Activated CD4-positive, alpha-beta T cell treated with anti-CD3 and anti-CD28 coated beads, Interleukin-2, amount 10 ng/mL, durations not matched to agents 24 days and 14 days (primary cell): ENCODE measurements at regions of chr5 and their contacts with region 1.

Region 1: DNA sequence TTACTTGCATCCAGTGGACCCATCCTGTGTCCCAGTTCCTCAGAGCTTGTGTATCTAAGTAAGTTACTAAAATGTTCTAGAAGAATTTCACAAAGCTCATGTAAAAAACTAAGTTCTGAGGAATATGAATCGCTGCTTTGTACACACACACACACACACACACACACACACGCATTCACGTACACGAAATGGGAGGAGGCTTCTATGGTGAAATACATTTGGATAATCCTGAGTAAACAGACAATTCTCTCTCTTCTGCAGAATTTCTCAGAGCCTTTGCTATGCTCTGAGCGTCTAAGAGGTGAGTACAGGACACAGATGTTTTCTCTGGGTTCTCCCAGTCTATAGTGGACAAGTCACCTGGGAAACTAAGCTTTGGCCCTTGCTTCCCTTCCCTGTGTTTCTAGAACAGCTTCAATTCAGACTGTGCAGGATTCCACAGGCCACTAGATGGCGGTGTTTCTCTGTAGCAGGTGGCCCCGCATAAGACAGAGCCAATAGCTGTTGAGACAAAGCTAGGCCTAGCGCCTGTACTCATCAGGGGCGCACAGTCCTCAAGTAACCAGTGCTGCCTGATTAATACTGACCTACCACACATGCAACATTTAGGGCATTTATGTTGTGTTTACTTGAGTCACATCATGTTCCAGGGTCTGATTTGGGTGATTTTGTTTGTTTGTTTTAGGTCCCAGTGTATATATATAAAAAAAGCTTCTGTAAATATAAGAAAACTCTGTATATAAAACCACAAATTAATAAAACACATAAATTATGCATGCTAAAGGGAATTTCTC is 114.8 kb downstream of the LIFR start:
- DNase-seq: peak; percentile 94
- H3K4me3 Mint-ChIP-seq: no peak overlapping the region
- H3K27ac Mint-ChIP-seq: no peak overlapping the region
- H3K4me1 Mint-ChIP-seq: no peaks in the 10 kb centered on the region
- H3K27me3 Mint-ChIP-seq: peaks cover 36% of the 10 kb centered on the region

Region 2: DNA sequence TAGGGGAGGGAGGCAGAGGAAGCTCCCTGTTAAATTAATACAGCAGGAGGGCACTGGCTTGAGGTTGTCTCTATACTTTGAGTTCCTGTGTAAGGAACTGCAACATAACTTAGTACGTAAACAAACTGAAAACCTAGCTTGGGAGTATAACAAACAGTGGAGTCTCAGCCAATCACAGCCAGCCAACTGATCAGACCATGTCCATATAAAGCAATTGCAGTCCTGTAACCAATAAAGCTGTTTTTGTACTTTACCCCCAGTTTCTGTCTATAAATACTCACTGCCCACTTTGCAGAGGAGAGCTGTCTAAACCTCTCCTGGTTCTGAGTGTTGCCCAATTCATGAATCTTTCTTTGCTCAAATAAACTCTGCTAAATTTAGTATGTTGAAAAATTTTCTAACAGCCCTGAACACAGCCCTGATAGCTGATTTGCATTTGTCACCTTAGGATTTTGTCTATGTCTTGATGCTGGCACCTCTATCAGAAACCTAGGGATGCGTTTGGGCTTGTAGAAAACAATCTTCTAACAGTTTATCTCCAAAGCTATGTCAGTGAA is 641.7 kb before region 1 on chr5:
- intact Hi-C with region 1: no loop called
- DNase-seq: no peak
- H3K4me3 Mint-ChIP-seq: no peak overlapping the region
- H3K27ac Mint-ChIP-seq: no peak overlapping the region
- H3K4me1 Mint-ChIP-seq: no peaks in the 10 kb centered on the region
- H3K27me3 Mint-ChIP-seq: peaks cover 2% of the 10 kb centered on the region

Region 3: GRCh38 chr5:38551030-38552017 is 109.7 kb after region 1 on chr5:
- intact Hi-C with region 1: loop called (anchors 1 kb)
- DNase-seq: peak; percentile 60
- H3K4me3 Mint-ChIP-seq: no peak overlapping the region
- H3K27ac Mint-ChIP-seq: no peak overlapping the region
- H3K4me1 Mint-ChIP-seq: peaks cover 5% of the 10 kb centered on the region
- H3K27me3 Mint-ChIP-seq: peaks cover 47% of the 10 kb centered on the region

Region 4: GRCh38 chr5:38556599-38557305 is 115.1 kb after region 1 on chr5 and contains the start of gene LIFR:
- intact Hi-C with region 1: loop called (anchors 1 kb)
- DNase-seq: peak; percentile 87
- H3K4me3 Mint-ChIP-seq: peak within 1 kb of the TSS; percentile 88
- H3K27ac Mint-ChIP-seq: peak within 1 kb of the TSS; percentile 67
- H3K4me1 Mint-ChIP-seq: peaks cover 7% of the 10 kb centered on the region
- H3K27me3 Mint-ChIP-seq: peaks cover 66% of the 10 kb centered on the region
- total RNA-seq, gene LIFR: 0.12 TPM in 2 replicates

Region 5: GRCh38 chr5:38666668-38667498 is 225.2 kb after region 1 on chr5:
- intact Hi-C with region 1: loop called (anchors 5 kb)
- DNase-seq: no peak
- H3K4me3 Mint-ChIP-seq: no peak overlapping the region
- H3K27ac Mint-ChIP-seq: no peak overlapping the region
- H3K4me1 Mint-ChIP-seq: no peaks in the 10 kb centered on the region
- H3K27me3 Mint-ChIP-seq: peaks cover 8% of the 10 kb centered on the region

Region 6: GRCh38 chr5:38809388-38810359 is 368.0 kb after region 1 on chr5:
- intact Hi-C with region 1: loop called (anchors 1 kb)
- DNase-seq: peak; percentile 86
- H3K4me3 Mint-ChIP-seq: no peak overlapping the region
- H3K27ac Mint-ChIP-seq: no peak overlapping the region
- H3K4me1 Mint-ChIP-seq: peaks cover 18% of the 10 kb centered on the region
- H3K27me3 Mint-ChIP-seq: peaks cover 12% of the 10 kb centered on the region

Region 7: DNA sequence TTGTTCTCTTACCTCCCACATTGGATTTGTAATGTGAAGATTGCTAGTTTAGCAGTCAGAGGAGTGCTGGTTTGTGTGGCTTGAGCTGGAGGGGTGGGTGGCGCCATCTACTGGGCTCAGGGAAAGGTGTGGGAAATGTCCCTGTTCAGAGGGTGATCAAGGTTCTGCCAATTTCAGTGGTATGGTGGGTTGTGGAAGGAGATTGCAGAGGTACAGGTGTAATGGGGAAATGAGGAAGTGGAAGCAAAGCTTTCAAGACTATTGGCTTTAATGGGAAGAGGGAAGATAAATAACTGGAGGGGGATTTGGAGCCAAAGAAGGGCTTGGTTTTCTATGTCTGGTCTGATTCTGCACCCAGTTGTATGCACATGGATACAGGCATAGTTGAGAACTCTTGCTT is 480.5 kb after region 1 on chr5:
- intact Hi-C with region 1: loop called (anchors 2 kb)
- DNase-seq: peak; percentile 79
- H3K4me3 Mint-ChIP-seq: no peak overlapping the region
- H3K27ac Mint-ChIP-seq: no peak overlapping the region
- H3K4me1 Mint-ChIP-seq: no peaks in the 10 kb centered on the region
- H3K27me3 Mint-ChIP-seq: peaks cover 40% of the 10 kb centered on the region